AG04449 (cell line): ENCODE measurements at regions of chr1 and their contacts with region 1.

Region 1: GRCh38 chr1:203172128-203173010 is 3.3 kb downstream of the MYBPH start:
- DNase-seq: no peak
- H3K4me3 ChIP-seq: no peak overlapping the region
- CTCF ChIP-seq: peak; percentile 91

Region 2: GRCh38 chr1:202810615-202811295 is 361.6 kb before region 1 on chr1 and contains the start of gene PCAT6:
- CTCF ChIA-PET with region 1: no interaction called
- POLR2A ChIA-PET with region 1: no interaction called
- DNase-seq: peak; percentile 78
- H3K4me3 ChIP-seq: peak within 1 kb of the TSS; percentile 88
- CTCF ChIP-seq: no peak

Region 3: DNA sequence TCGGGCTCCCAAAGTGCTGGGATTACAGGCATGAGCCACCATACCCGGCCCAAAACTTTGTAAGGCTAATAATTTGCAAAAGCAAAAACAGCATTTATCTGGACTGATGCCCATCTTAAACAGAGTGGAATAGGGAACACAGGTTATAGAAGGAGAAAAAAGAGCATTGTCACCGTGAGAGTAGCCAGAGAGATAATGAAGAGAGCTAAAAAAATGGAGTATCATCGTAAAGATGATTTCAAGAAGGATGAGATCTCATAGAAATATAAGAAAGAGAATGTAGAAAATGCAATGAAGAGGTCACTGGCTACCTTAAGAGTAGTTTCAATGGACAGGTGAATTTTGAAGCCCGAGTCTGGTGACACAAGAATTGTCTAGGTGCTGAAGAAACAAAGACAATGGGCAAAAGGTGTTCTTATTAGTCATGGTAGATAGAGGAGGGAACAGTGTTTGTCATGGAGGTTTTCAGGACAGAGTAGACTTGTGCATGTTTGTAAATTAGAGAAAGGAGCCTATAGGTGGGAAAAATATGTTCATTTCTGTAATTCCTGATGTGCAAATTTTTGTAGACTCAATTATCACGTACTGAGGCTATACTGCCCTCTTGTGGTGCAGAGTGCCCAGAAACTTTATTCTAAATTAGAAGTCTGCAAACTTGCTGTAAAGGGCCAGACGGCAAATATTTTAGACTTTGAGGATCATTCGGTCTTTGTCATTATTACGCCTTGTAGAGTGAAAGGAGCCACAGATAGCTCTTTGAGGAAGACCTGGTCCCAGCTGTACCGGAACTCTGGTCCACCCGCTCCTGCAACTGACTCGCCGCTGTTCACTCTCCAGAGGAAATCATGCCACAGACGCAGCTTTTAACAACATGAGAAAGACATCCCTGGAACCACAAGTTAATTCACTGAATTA is 173.3 kb before region 1 on chr1:
- CTCF ChIA-PET with region 1: no interaction called
- POLR2A ChIA-PET with region 1: no interaction called
- DNase-seq: peak; percentile 5
- H3K4me3 ChIP-seq: peak overlapping the region; percentile 36
- CTCF ChIP-seq: peak; percentile 49

Region 4: DNA sequence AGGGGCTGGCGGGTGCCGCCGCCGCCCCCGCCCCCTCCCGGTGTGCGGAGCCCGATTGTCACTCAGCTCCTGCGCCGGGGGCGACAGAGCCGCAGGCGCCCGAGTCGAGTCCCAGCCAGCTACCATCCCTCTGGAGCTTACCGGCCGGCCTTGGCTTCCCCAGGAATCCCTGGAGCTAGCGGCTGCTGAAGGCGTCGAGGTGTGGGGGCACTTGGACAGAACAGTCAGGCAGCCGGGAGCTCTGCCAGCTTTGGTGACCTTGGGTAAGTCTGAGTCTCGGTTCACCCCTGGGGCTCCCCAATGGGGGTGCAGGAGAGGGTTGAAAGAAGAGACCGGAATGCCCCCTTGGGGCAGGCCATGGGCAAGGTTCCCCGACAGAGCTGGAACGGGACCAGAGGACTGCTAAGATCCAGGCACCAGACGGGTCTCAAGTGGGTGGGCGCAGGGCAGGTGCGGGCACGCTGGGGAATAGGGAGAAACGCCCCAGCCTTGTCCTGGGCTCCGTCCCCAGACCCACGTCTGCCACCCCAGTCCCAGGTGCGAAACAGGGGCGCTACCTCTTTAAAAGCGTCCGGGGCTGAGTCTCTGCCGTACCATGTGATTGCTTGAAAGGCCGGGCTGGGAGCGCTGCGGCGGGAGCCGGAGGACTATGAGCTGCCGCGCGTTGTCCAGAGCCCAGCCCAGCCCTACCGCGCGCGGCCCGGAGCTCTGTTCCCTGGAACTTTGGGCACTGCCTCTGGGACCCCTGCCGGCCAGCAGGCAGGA is 44.5 kb before region 1 on chr1 and contains the start of gene ADORA1:
- CTCF ChIA-PET with region 1: interaction called, 65 read pairs
- POLR2A ChIA-PET with region 1: no interaction called
- DNase-seq: no peak
- H3K4me3 ChIP-seq: peak within 1 kb of the TSS; percentile 57
- CTCF ChIP-seq: peak; percentile 14

Region 5: GRCh38 chr1:203140743-203141520 is 31.4 kb before region 1 on chr1:
- CTCF ChIA-PET with region 1: interaction called, 12 read pairs
- POLR2A ChIA-PET with region 1: no interaction called
- DNase-seq: no peak
- H3K4me3 ChIP-seq: no peak overlapping the region
- CTCF ChIP-seq: no peak

Region 6: GRCh38 chr1:203186446-203187303 is 14.3 kb after region 1 on chr1 and contains the start of gene CHI3L1:
- CTCF ChIA-PET with region 1: interaction called, 94 read pairs
- POLR2A ChIA-PET with region 1: no interaction called
- DNase-seq: no peak
- H3K4me3 ChIP-seq: no peak within 1 kb of the TSS
- CTCF ChIP-seq: no peak

Region 7: DNA sequence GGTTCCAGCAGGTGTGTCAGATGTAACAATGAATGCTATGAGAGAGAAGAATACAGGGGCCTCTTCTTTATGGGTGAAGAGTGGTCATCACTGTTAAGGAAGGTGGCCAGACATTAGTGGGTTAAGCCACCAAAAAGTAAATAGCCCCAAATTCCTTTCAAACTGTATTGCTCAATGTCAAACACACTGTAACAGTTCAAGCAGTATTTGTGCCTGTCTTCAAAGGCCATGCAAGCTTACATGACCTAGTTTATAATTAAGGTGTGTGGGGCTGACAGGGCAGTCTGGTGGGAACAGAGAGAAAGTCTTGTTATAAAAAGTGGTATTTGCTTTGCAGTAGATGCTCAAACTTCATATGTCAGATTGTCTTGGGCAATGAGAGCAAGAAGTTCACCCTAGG is 38.6 kb after region 1 on chr1:
- CTCF ChIA-PET with region 1: interaction called, 31 read pairs
- POLR2A ChIA-PET with region 1: no interaction called
- DNase-seq: no peak
- H3K4me3 ChIP-seq: no peak overlapping the region
- CTCF ChIP-seq: no peak